ENCODE measurements at regions of chr9 and their contacts with region 1.

Region 1: DNA sequence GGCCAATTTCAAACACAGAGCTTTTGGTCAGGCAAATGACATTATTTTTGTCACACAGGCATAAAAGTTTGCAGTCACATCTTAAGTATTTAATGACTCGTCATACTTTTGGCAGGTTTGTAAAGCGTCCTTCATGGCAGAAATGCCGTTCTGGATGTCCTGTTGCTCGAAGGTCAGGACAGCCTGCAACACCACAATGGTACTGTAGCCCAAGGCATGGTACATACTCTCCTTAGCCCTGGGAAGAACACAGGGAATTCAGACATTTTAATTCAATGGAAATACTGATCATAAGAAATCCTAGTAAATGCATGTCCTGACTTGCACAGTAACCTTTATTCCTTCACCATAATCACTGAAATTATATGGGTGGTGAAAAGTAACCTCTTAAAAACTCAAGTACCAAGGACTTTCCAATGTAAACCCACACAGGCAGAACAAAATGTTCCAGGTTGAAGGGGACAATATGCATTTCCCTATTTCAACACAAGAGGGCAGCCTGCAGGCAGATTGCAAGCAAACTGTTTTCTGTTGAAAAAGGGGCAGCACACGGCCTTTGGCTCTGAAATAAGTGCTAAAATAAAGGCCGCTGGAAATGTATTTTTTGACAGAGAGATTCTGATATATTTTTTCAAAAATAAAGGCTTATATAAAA is 95.7 kb downstream of the TTC39B start:
- DNase-seq: peak in 8 of 9 donors; percentile 26 to 69 (median 58)
- ATAC-seq: peak; percentile 78
- H3K4me3 ChIP-seq: no peak overlapping the region
- H3K4me3 Mint-ChIP-seq: no peak overlapping the region
- H3K27ac ChIP-seq: no peak overlapping the region
- H3K27ac Mint-ChIP-seq: no peak overlapping the region
- H3K4me1 ChIP-seq: no peaks in the 10 kb centered on the region
- H3K4me1 Mint-ChIP-seq: peaks cover 4 to 12% (median 8%) of the 10 kb centered on the region in 7 donors
- H3K27me3 ChIP-seq: no peaks in the 10 kb centered on the region
- H3K27me3 Mint-ChIP-seq: no peaks in the 10 kb centered on the region

Region 2: DNA sequence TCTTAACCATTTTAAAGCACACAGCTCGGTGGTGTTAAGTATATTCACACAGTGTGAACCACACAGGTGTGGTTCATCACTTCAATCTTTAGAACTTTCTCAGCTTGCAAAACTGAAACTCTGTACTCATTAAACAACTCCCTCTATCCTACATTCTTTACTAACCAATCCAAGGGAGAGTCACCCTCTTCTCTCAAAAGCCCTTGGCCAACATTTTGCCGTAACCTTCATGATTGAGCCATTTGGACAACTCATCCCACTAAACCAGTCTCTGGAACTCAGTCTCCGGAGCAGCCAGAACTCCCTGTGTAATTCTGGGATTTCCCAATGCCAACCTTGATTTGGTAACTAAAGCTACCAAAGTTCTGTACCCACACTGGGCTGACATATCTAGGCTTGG is 11.0 kb after region 1 on chr9:
- CTCF ChIA-PET with region 1: interaction called, 9 read pairs
- POLR2A ChIA-PET with region 1: interaction called, 15 read pairs
- intact Hi-C with region 1: no loop called
- DNase-seq: no peak
- ATAC-seq: no peak
- H3K4me3 ChIP-seq: no peak overlapping the region
- H3K4me3 Mint-ChIP-seq: no peak overlapping the region
- H3K27ac ChIP-seq: no peak overlapping the region
- H3K27ac Mint-ChIP-seq: peak overlapping the region in 4 of 9 donors; percentile 14 to 76 (median 50)
- H3K4me1 ChIP-seq: peaks cover 0 to 4% of the 10 kb centered on the region in 2 donors
- H3K4me1 Mint-ChIP-seq: peaks cover 13 to 41% (median 28%) of the 10 kb centered on the region in 7 donors
- H3K27me3 ChIP-seq: no peaks in the 10 kb centered on the region
- H3K27me3 Mint-ChIP-seq: no peaks in the 10 kb centered on the region

Region 3: DNA sequence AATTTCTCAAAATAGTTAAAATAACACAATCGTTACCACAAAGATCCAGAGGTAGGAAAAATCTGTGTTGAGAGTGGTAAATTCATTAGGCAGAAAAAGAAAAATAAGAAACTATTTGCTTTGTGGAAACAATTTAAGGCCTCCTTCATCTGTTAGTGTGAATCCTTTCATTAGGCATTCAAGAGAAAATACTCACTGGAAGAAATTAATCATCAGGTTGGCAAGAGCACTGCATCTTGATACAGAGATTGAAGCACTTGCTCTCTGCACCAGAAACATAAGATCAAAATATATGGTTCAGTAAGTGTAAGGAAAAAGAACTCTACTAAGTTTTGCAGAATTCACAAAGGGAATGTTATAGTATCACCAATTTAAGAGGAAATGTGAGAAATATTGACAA is 51.3 kb after region 1 on chr9:
- CTCF ChIA-PET with region 1: no interaction called
- POLR2A ChIA-PET with region 1: no interaction called
- intact Hi-C with region 1: no loop called
- DNase-seq: no peak
- ATAC-seq: no peak
- H3K4me3 ChIP-seq: no peak overlapping the region
- H3K4me3 Mint-ChIP-seq: no peak overlapping the region
- H3K27ac ChIP-seq: no peak overlapping the region
- H3K27ac Mint-ChIP-seq: peak overlapping the region in 2 of 9 donors; percentile 15 to 49
- H3K4me1 ChIP-seq: no peaks in the 10 kb centered on the region
- H3K4me1 Mint-ChIP-seq: peaks cover 8 to 50% (median 26%) of the 10 kb centered on the region in 7 donors
- H3K27me3 ChIP-seq: no peaks in the 10 kb centered on the region
- H3K27me3 Mint-ChIP-seq: no peaks in the 10 kb centered on the region

Region 4: DNA sequence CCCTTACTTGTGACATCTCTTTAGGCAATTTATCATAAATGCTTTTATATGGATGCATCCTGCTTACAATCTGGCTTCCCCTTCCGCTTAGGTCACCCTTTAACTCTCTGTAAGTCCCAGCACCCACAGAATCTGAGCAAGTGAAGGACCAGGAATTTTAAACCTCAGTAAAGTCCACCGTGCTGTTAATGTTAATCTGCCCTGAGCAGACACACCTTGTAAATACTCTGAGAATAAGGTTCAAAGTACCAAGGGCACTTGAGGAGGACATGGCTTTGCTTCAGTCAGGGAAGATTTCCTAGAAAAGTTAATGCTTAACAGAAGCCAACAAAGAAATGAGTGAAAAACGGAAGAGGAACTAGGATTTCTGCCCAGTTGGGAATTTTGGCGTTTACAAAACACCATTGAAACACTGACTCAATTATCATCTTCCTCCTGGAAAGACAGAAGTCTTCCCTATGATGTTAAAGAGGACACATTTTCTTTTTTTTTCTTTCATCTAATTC is 122.1 kb after region 1 on chr9:
- CTCF ChIA-PET with region 1: interaction called, 3 read pairs
- POLR2A ChIA-PET with region 1: no interaction called
- intact Hi-C with region 1: loop called in 1 of 2 experiments (anchors 1 kb)
- DNase-seq: no peak
- ATAC-seq: no peak
- H3K4me3 ChIP-seq: no peak overlapping the region
- H3K4me3 Mint-ChIP-seq: no peak overlapping the region
- H3K27ac ChIP-seq: no peak overlapping the region
- H3K27ac Mint-ChIP-seq: no peak overlapping the region
- H3K4me1 ChIP-seq: no peaks in the 10 kb centered on the region
- H3K4me1 Mint-ChIP-seq: peaks cover 0 to 7% (median 4%) of the 10 kb centered on the region in 7 donors
- H3K27me3 ChIP-seq: no peaks in the 10 kb centered on the region
- H3K27me3 Mint-ChIP-seq: peaks cover 0 to 25% (median 0%) of the 10 kb centered on the region in 5 donors

Region 5: GRCh38 chr9:15422372-15423230 is 211.3 kb after region 1 on chr9 and contains the start of gene SNAPC3:
- CTCF ChIA-PET with region 1: interaction called, 3 read pairs
- POLR2A ChIA-PET with region 1: no interaction called
- intact Hi-C with region 1: loop called (anchors 1 to 2 kb)
- DNase-seq: peak; percentile 86 to 96 (median 93)
- ATAC-seq: peak; percentile 99
- H3K4me3 ChIP-seq: peak within 1 kb of the TSS; percentile 90
- H3K4me3 Mint-ChIP-seq: peak within 1 kb of the TSS; percentile 89 to 95 (median 92)
- H3K27ac ChIP-seq: peak within 1 kb of the TSS; percentile 74
- H3K27ac Mint-ChIP-seq: peak within 1 kb of the TSS; percentile 89 to 96 (median 93)
- H3K4me1 ChIP-seq: peaks cover 0 to 8% of the 10 kb centered on the region in 2 donors
- H3K4me1 Mint-ChIP-seq: peaks cover 20 to 47% (median 45%) of the 10 kb centered on the region in 7 donors
- H3K27me3 ChIP-seq: no peaks in the 10 kb centered on the region
- H3K27me3 Mint-ChIP-seq: no peaks in the 10 kb centered on the region
- total RNA-seq, gene SNAPC3: 11.9 to 44.4 (median 33.5) TPM

Region 6: DNA sequence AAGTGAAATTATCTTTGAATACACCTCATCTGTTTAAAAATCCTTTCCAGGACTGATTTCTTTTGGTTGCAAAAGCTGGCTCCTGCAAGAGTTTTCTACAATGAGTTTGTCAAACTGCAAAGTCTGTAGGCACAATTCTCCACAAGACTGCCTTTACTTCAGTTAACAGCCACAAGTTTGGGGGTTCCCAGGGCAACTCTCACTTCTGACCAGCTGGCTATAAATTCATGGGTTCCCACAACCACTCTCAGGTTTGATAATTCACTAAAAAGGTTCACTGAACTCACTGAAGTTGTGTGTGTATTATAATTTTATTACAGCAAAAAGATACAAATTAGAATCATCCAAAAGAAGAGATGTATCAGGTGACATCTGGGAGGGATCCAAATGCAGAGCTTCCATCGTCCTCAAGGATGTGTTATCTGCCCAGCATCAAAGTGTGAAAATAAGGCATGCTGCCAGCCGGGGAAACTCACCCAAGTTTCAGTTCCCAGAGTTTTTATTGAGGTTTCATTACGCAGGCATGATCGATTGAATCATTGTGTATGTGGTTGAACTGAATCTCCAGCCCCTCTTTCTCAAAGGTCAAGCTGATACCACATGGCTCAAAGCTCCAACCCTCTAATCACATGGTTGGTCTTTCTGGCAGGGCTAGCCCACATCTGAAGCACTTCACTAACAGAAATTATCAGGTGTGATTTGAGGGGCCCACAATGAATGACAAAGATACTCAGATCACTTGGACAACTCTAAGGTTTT is 318.5 kb after region 1 on chr9:
- CTCF ChIA-PET with region 1: no interaction called
- POLR2A ChIA-PET with region 1: no interaction called
- intact Hi-C with region 1: loop called (anchors 1 kb)
- DNase-seq: no peak
- ATAC-seq: no peak
- H3K4me3 ChIP-seq: no peak overlapping the region
- H3K4me3 Mint-ChIP-seq: no peak overlapping the region
- H3K27ac ChIP-seq: no peak overlapping the region
- H3K27ac Mint-ChIP-seq: no peak overlapping the region
- H3K4me1 ChIP-seq: no peaks in the 10 kb centered on the region
- H3K4me1 Mint-ChIP-seq: peaks cover 0 to 18% (median 7%) of the 10 kb centered on the region in 7 donors
- H3K27me3 ChIP-seq: no peaks in the 10 kb centered on the region
- H3K27me3 Mint-ChIP-seq: peaks cover 0 to 7% (median 0%) of the 10 kb centered on the region in 5 donors

Measured in naive thymus-derived CD4-positive, alpha-beta T cell (primary cell).